OCI-LY7 (cell line): ENCODE measurements at regions of chr15 and their contacts with region 1.

Region 1: DNA sequence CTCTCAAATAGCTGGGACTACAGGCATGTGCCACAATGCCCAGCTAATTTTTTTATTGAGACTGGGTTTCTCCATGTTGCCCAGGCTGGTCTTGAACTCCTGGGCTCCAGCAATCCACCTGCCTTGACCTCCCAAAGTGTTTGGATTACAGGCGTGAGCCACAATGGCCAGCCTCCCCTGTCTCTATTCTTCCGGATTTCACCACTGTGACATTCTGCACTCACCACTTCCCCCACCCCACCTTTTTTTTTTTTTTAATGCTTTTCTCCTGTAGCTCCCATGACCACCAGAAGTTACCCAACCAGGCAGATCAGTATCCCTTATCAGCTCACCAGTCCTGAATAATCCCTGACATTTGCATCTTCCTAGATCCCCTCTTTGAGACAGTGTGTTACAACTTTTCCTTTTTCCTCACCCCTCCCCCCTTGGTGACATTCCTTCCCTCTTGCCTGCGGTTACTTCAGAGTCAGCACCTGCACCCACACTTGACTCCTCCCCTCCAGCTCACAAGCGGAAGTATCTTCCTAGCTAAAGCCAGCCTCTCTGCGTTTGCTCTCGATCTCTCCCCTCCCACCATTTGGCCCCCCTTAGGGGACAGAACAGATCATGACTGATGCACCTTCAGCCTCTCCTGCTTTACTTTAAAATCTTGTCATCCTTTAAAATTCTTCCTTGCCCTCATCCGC is 13.5 kb upstream of the ZNF592 start:
- DNase-seq: peak; percentile 95
- H3K4me3 ChIP-seq: peak overlapping the region; percentile 62
- H3K27ac ChIP-seq: peak overlapping the region; percentile 98
- H3K4me1 ChIP-seq: peaks cover 59% of the 10 kb centered on the region
- CTCF ChIP-seq: no peak

Region 2: DNA sequence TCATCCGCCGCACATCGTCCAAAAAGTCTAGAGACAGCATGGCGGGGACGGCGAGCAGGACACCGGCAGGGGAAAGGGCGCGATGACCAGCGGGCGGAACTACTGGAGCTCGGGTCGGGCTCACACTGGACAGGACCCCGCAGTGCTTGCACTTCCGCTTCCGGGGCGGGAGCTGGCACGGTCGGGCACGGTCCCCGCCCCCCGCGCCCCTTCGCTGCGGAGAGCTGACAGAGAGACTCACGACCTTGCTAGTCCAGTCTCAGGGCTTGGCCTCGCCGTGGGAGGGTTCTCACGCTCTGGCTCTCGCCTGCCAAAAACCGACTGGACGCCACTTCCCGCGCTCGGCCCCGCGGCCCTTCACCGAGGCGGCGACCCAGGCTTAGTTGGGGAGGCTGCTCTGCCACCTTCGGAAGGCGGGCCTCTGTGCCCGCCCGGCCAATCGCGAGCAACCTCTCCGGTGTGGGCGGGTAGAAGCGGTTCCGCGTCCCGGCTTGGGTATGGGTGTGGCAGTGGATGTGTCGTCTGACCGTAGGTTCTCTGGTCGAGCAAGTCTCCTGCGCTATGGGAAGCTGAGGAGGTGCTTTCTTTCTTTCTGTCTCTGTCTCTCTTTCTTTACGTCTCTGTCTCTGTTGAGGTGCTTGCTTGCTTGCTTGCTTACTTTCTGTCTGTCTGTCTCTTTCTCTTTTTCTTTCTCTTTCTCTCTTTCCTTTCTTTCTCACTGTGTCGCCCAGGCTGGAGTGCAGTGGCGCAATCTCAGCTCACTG is 18.7 kb before region 1 on chr15 and contains the start of gene SEC11A:
- CTCF ChIA-PET with region 1: no interaction called
- POLR2A ChIA-PET with region 1: interaction called, 72 read pairs
- intact Hi-C with region 1: loop called (anchors 1 kb)
- DNase-seq: peak; percentile 96
- H3K4me3 ChIP-seq: peak within 1 kb of the TSS; percentile 89
- H3K27ac ChIP-seq: peak within 1 kb of the TSS; percentile 59
- H3K4me1 ChIP-seq: peaks cover 32% of the 10 kb centered on the region
- CTCF ChIP-seq: no peak
- total RNA-seq, gene SEC11A: 41.4 and 47.0 TPM in 2 replicates

Region 3: DNA sequence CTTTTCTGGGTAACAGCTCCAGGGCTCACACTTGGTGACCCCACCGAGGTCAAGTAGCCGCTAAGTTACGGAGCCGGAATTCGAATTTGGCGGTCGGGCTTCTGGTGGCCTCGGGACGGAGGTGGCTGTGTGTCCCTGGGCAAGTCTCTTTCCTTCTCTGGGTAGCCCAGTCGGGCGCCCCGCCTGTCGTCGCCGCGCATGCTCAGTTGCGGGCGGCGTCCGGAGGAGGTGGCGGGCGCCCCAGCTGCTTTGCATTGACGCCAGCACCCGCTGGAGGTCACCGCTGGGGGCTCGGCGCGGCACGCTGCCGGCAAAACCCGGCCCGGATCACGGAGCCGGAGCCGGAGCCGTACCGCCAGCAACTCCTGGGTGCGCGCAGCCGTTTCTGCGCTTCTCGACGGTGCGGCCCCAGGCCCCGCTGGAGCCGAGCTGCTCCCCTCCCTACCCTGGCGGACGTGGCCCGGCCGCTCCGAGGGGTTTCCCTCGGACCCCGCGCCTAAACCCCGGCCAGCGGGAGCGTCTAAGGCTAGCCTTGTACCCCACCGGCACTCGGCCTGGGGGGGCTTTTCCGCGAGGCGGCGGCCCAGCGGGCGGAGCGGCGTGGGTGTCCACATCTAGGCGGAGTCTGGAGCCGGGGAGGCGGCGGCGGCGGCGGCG is 246.2 kb after region 1 on chr15:
- CTCF ChIA-PET with region 1: no interaction called
- POLR2A ChIA-PET with region 1: no interaction called
- intact Hi-C with region 1: no loop called
- DNase-seq: peak; percentile 98
- H3K4me3 ChIP-seq: peak overlapping the region; percentile 73
- H3K27ac ChIP-seq: peak overlapping the region; percentile 68
- H3K4me1 ChIP-seq: peaks cover 44% of the 10 kb centered on the region
- CTCF ChIP-seq: no peak